Panc1 (cell line): ENCODE measurements at regions of chr11 and their contacts with region 1.

Region 1: DNA sequence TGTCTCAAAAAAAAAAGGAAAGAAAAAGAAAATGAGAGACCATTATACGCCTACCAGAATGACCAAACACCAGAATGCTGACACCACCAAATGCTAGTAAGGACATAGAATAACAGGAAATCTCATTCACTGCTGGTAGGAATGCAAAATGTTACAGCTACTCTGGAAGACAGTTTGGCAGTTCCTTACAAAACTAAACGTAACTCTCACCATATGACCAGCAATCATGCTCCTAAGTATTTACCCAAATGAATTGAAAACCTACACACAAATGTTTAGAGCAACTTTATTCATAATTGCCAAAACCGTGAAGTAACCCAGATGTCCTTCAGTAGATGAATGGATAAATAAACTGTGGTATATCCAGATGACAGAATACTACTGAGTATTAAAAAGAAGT is 7.2 kb downstream of the CHKA start:
- DNase-seq: no peak
- ATAC-seq: no peak
- H3K4me3 ChIP-seq: no peak overlapping the region
- H3K27ac ChIP-seq: no peak overlapping the region
- H3K4me1 ChIP-seq: peaks cover 29% of the 10 kb centered on the region
- H3K27me3 ChIP-seq: no peaks in the 10 kb centered on the region
- CTCF ChIP-seq: no peak

Region 2: GRCh38 chr11:67656278-67656922 is 457.6 kb before region 1 on chr11:
- CTCF ChIA-PET with region 1: no interaction called
- POLR2A ChIA-PET with region 1: no interaction called
- in situ Hi-C with region 1: no loop called
- intact Hi-C with region 1: no loop called
- DNase-seq: no peak
- ATAC-seq: no peak
- H3K4me3 ChIP-seq: no peak overlapping the region
- H3K27ac ChIP-seq: no peak overlapping the region
- H3K4me1 ChIP-seq: no peaks in the 10 kb centered on the region
- H3K27me3 ChIP-seq: no peaks in the 10 kb centered on the region
- CTCF ChIP-seq: no peak

Region 3: DNA sequence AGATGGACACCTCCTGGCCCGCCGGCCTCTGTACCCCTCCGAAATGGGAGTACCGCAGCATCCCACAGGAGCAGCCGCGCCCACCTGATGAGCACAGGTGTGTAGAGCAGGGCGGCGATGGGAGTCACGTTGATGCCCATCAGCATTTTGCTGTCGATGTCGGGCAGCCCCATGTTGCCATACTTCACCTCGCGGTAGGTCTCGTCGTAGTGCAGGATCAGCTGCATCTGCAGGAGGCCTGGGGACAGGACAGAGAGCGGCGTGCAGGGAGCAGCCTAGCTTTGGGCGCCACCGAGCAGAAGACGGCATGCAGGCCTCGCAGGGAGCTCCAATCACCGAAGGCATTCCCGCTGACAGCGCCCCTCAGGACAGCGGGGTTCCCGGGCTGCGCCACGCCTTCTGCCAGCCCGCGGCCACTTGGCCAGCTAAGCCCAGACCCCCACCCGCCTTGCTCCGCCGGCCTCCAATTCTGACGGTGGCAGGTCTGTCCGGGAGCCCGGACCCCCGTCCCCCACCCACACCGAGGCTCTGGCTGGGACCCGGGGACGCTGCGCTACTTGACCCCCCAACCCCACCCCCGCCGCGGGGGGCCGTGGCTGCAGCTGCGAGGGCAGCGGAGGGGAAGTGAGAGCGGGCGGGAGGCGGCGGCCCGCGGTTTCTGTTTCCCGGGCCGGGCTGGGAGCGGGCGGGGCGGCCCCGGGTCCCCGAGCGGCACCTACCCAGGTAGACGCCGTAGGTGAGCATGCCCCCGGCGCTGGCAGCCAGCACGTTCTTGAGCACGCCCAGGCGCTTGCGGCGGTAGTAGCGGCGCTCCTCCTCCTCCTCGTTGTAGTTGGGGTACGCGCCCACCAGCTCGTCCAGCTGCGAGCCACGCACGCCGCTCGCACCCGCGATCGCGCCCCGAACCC is 110.8 kb before region 1 on chr11:
- CTCF ChIA-PET with region 1: no interaction called
- POLR2A ChIA-PET with region 1: interaction called, 11 read pairs
- in situ Hi-C with region 1: no loop called
- intact Hi-C with region 1: no loop called
- DNase-seq: no peak
- ATAC-seq: peak; percentile 67
- H3K4me3 ChIP-seq: peak overlapping the region; percentile 51 to 66
- H3K27ac ChIP-seq: no peak overlapping the region
- H3K4me1 ChIP-seq: peaks cover 11% of the 10 kb centered on the region
- H3K27me3 ChIP-seq: no peaks in the 10 kb centered on the region
- CTCF ChIP-seq: no peak

Region 4: DNA sequence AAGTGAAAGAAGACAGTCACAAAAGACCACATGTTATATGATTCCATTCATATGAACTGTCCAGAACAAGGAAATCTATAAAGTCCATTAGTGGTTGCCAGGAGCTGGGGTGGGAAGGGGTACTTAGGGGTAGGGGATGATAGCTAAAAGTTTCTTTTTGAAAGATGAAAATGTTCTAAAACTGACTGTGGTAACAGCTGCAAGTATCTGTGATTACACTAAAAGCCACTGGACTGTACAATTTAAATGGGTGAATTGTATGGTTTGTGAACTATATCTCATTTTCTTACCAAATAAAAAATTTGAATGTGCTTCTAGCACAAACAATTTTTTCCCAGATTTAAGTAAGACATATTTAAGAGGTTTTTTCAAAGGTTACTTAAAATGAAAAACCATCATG is 14.9 kb before region 1 on chr11:
- CTCF ChIA-PET with region 1: no interaction called
- POLR2A ChIA-PET with region 1: interaction called, 10 read pairs
- in situ Hi-C with region 1: no loop called
- intact Hi-C with region 1: no loop called
- DNase-seq: no peak
- ATAC-seq: no peak
- H3K4me3 ChIP-seq: no peak overlapping the region
- H3K27ac ChIP-seq: peak overlapping the region; percentile 55; the same call in 1 of the 2 replicates
- H3K4me1 ChIP-seq: peaks cover 18% of the 10 kb centered on the region
- H3K27me3 ChIP-seq: no peaks in the 10 kb centered on the region
- CTCF ChIP-seq: no peak

Region 5: DNA sequence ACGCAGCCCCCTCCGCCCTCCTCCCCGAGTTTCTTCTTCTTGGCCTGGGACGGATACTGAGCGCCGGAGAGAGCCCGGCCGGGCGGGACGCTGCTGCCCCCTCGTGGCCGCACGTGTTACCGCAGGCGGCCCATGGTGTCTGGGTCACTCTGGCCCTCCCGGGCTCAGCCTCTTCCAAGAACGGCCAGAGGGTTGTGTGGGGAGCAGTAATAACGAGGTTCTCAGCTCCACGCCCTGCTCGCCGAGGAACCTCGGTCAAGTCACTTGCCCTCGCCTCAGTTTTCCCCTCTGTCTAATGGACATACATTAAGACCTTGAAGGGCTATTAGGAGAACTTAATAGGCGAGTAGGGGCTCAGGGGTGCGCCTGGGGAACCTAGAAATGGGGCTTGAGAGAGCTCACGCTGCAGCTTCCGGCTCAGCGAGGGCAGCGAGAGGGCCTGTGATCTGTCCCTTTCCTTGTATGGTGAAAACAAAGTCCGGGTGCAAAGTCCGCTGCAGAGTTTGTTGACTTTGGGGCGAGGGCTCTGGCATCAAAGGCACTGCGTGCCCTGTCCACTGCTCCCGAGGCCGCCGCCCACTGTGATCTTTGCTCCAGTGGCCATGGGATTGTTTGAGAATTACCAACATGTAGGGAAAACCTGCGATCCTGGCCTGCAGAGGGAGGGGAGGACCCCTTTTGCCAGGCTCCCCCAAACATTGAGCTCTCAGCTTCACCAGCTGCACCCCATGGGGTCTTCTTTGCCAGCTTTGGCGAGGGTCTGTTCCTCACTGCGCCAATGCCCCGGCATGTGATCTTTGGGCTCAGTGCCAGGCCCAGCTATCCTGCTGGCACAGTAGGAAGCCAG is 184.0 kb after region 1 on chr11:
- CTCF ChIA-PET with region 1: no interaction called
- POLR2A ChIA-PET with region 1: no interaction called
- in situ Hi-C with region 1: no loop called
- intact Hi-C with region 1: no loop called
- DNase-seq: no peak
- ATAC-seq: peak; percentile 95
- H3K4me3 ChIP-seq: peak overlapping the region in 1 of 2 experiments; percentile 47; a peak in 2 of 4 replicates
- H3K27ac ChIP-seq: peak overlapping the region; percentile 36
- H3K4me1 ChIP-seq: peaks cover 24% of the 10 kb centered on the region
- H3K27me3 ChIP-seq: no peaks in the 10 kb centered on the region
- CTCF ChIP-seq: peak; percentile 100

Region 6: GRCh38 chr11:68532727-68533369 is 418.9 kb after region 1 on chr11:
- CTCF ChIA-PET with region 1: no interaction called
- POLR2A ChIA-PET with region 1: no interaction called
- in situ Hi-C with region 1: no loop called
- intact Hi-C with region 1: no loop called
- DNase-seq: no peak
- ATAC-seq: no peak
- H3K4me3 ChIP-seq: no peak overlapping the region
- H3K27ac ChIP-seq: no peak overlapping the region
- H3K4me1 ChIP-seq: no peaks in the 10 kb centered on the region
- H3K27me3 ChIP-seq: no peaks in the 10 kb centered on the region
- CTCF ChIP-seq: no peak

Region 7: DNA sequence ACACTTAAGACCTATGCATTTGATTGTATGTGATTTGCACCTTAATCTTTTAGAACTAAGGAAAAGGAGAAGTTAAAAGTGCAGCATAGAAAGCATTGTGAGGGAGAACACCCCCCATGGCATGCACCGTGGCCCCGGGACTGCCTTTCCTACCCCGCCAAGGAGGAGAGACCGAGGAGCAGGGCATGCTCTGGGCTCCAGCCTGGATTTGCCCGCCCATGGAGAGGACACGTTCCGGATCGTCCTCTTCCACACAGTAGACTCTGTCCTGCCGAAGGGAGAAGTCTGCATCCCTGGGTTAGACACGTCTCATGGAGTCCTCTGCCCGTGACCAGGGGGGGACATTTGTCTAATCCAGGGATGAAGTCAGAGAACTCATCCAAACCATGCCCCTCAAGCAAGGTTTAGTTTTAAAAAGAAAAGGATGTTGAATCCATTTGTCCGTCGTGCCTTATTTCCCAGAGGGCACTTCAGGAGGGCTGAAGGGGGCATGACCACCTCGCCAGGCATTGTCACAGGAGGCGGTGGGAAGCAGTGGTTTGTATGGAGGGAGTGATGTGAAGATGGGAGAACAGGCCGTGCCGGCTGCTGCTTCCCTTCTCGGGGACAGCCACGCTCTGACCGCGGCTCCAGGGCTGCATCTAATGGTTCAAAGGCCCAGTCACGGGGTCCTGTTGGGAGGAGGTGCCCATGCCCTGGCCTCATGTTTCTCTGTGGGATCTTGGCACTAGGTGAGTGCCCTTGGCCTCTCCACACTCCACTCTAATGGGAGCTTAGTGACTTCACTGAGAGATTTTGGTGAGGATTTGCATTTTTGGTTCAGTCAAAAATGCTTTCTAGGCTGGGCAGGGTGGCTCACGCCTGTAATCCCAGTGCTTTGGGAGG is 504.2 kb after region 1 on chr11:
- CTCF ChIA-PET with region 1: no interaction called
- POLR2A ChIA-PET with region 1: no interaction called
- in situ Hi-C with region 1: no loop called
- intact Hi-C with region 1: no loop called
- DNase-seq: no peak
- ATAC-seq: peak; percentile 43; the same call in 1 of the 2 replicates
- H3K4me3 ChIP-seq: no peak overlapping the region
- H3K27ac ChIP-seq: no peak overlapping the region
- H3K4me1 ChIP-seq: no peaks in the 10 kb centered on the region
- H3K27me3 ChIP-seq: no peaks in the 10 kb centered on the region
- CTCF ChIP-seq: no peak